AG04450 (cell line): ENCODE measurements at regions of chr5 and their contacts with region 1.

Region 1: DNA sequence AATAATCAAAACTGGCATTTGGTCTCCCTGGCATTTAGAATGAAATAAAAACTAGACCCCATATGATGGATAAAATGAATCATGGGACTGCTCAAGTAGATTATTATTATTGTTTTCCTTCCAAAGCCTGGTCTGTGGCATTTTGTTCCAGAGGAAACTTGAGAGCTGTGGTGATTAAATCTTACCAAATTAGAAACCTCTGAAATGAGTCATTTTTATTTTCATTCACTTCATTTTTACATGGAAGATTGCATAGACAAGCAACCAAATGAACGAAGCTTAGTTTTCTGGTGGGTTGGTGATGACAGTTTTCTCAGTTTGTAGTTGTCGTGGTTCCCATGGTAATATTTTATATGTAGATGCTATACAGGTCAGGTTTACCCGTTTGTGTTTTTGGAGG is 23.4 kb downstream of the PAM start:
- DNase-seq: no peak
- H3K4me3 ChIP-seq: no peak overlapping the region
- H3K27ac ChIP-seq: no peak overlapping the region
- H3K27me3 ChIP-seq: no peaks in the 10 kb centered on the region
- CTCF ChIP-seq: no peak

Region 2: GRCh38 chr5:102638912-102639652 is 139.4 kb before region 1 on chr5:
- CTCF ChIA-PET with region 1: no interaction called
- POLR2A ChIA-PET with region 1: no interaction called
- DNase-seq: no peak
- H3K4me3 ChIP-seq: no peak overlapping the region
- H3K27ac ChIP-seq: no peak overlapping the region
- H3K27me3 ChIP-seq: no peaks in the 10 kb centered on the region
- CTCF ChIP-seq: no peak

Region 3: GRCh38 chr5:102762095-102762534 is 16.4 kb before region 1 on chr5:
- CTCF ChIA-PET with region 1: interaction called, 27 read pairs
- POLR2A ChIA-PET with region 1: no interaction called
- DNase-seq: no peak
- H3K4me3 ChIP-seq: no peak overlapping the region; the same call in 1 of the 2 replicates
- H3K27ac ChIP-seq: no peak overlapping the region
- H3K27me3 ChIP-seq: no peaks in the 10 kb centered on the region
- CTCF ChIP-seq: no peak

Region 4: DNA sequence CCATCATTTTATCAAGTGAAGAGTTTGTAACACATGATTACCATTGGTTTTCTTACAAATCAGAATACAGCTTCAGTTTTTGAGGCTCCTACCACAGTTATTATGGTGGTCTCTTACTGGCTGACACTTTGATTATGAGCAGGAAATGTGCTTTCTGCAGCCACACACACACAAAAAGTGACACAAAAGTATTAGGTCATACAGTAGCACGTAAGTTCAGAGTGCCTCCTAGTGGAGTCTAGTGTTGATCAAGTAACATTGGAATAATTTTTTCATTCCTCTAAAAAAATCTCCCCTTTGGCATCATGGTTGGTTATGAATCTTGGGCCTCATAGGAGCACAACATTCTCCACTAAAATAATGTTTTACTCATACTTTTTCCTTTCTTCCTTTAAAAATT is 14.2 kb after region 1 on chr5:
- CTCF ChIA-PET with region 1: interaction called, 45 read pairs
- POLR2A ChIA-PET with region 1: no interaction called
- DNase-seq: no peak
- H3K4me3 ChIP-seq: no peak overlapping the region
- H3K27ac ChIP-seq: no peak overlapping the region
- H3K27me3 ChIP-seq: no peaks in the 10 kb centered on the region
- CTCF ChIP-seq: peak; percentile 22

Region 5: DNA sequence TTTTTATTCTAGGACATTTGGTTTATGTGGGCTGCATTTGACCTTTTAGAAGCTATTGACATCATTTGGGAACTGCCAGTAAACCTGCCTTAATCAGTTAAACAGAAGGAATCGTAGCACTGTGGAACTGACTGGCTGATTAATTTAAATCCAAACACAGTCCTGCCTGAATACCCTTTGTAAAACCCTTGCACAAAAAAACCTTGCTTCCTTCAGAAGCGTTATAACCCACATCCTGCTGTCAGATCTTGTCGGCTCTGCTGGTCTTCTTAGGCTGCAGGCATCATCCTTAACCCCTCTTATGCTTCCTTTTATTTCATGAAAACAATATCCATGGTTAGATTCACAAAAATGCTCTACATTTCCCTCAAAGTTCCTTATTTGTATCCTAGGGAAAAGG is 22.9 kb after region 1 on chr5:
- CTCF ChIA-PET with region 1: interaction called, 32 read pairs
- POLR2A ChIA-PET with region 1: interaction called, 8 read pairs
- DNase-seq: no peak
- H3K4me3 ChIP-seq: no peak overlapping the region
- H3K27ac ChIP-seq: no peak overlapping the region
- H3K27me3 ChIP-seq: no peaks in the 10 kb centered on the region
- CTCF ChIP-seq: no peak

Region 6: GRCh38 chr5:102971697-102972293 is 193.3 kb after region 1 on chr5:
- CTCF ChIA-PET with region 1: interaction called, 19 read pairs
- POLR2A ChIA-PET with region 1: no interaction called
- DNase-seq: no peak
- H3K4me3 ChIP-seq: no peak overlapping the region
- H3K27ac ChIP-seq: no peak overlapping the region
- H3K27me3 ChIP-seq: no peaks in the 10 kb centered on the region
- CTCF ChIP-seq: peak; percentile 66

Region 7: GRCh38 chr5:103188436-103188835 is 410.0 kb after region 1 on chr5:
- CTCF ChIA-PET with region 1: no interaction called
- POLR2A ChIA-PET with region 1: no interaction called
- DNase-seq: no peak
- H3K4me3 ChIP-seq: no peak overlapping the region
- H3K27ac ChIP-seq: no peak overlapping the region
- H3K27me3 ChIP-seq: no peaks in the 10 kb centered on the region
- CTCF ChIP-seq: no peak

Region 8: DNA sequence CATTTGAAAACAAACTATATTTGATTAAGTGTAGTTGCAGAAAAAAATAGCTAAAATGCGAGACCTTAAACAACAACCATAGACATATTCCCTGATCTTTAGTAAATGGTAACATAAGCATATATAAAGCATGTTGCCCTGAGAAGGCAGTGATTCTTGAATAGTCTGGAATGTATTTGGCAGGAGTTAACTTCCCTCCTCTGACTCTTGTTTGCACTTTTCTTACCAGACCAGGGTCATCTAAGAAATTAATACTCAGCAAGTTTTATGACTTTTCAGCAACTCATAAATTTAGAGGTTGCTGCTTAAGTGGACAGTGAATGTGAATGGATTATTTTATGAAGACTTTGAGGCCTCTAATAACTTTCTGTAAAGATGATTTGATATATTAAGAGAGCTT is 839.4 kb after region 1 on chr5:
- CTCF ChIA-PET with region 1: no interaction called
- POLR2A ChIA-PET with region 1: no interaction called
- DNase-seq: no peak
- H3K4me3 ChIP-seq: no peak overlapping the region
- H3K27ac ChIP-seq: no peak overlapping the region
- H3K27me3 ChIP-seq: peaks cover 5% of the 10 kb centered on the region
- CTCF ChIP-seq: no peak